Caco-2 (cell line): ENCODE measurements at regions of chr21 and their contacts with region 1.

Region 1: GRCh38 chr21:41715649-41716281 is 51.1 kb downstream of the RIPK4 start:
- DNase-seq: peak; percentile 97 to 99
- H3K4me3 ChIP-seq: no peak overlapping the region
- H3K4me3 Mint-ChIP-seq: peak overlapping the region; percentile 88
- H3K27ac Mint-ChIP-seq: peak overlapping the region; percentile 88
- H3K4me1 ChIP-seq: peaks cover 65% of the 10 kb centered on the region
- H3K4me1 Mint-ChIP-seq: peaks cover 41% of the 10 kb centered on the region
- H3K27me3 ChIP-seq: no peaks in the 10 kb centered on the region
- H3K27me3 Mint-ChIP-seq: no peaks in the 10 kb centered on the region
- CTCF ChIP-seq: no peak

Region 2: DNA sequence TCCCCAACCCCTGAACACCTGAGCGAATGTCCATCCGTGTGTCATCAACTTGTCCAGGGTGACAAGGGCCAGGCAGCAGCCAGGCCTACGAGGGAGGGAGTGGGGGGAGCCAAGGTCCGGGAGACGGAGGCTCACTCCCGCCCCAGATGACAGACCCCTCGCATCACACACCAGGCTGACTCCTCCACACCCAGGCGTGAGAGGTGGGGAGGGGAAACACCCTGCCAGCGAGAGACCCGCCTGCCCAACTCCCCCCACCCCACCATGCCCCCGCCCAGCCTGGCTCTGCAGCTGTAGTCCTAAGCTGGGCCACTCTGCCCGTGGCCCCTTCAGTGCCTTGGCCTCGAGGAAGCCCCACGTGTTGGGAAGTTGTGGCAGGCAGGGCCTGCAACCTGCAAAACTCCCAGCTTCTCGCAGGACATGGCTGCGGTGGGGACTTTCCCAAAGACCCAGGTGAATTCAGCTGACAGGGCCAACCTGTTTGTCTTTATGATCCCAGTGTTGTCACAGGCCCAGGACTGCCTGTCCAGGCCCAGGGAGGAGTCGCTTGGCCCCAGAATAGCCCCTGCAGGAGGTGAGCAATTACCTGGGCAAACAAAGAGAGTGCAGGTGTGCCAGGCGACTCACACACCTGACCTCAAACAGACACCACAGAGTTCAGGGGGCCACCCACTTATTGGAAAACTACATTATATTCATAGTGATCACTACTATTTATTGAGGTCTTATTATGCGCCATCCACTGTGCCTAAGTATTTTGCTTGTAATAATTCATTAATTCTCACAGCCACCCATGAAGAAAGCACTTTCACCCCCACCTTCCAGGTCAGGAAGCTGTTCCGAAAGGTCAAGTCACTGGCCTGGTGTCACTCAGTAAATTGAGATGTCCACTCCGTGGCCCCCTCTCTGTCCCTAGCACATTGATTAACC is 11.6 kb before region 1 on chr21:
- CTCF ChIA-PET with region 1: no interaction called
- POLR2A ChIA-PET with region 1: interaction called, 5 read pairs
- intact Hi-C with region 1: loop called (anchors 1 kb)
- DNase-seq: peak; percentile 85 to 92
- H3K4me3 ChIP-seq: no peak overlapping the region
- H3K4me3 Mint-ChIP-seq: peak overlapping the region; percentile 28
- H3K27ac Mint-ChIP-seq: peak overlapping the region; percentile 67
- H3K4me1 ChIP-seq: peaks cover 53% of the 10 kb centered on the region
- H3K4me1 Mint-ChIP-seq: peaks cover 40% of the 10 kb centered on the region
- H3K27me3 ChIP-seq: no peaks in the 10 kb centered on the region
- H3K27me3 Mint-ChIP-seq: no peaks in the 10 kb centered on the region
- CTCF ChIP-seq: no peak

Region 3: DNA sequence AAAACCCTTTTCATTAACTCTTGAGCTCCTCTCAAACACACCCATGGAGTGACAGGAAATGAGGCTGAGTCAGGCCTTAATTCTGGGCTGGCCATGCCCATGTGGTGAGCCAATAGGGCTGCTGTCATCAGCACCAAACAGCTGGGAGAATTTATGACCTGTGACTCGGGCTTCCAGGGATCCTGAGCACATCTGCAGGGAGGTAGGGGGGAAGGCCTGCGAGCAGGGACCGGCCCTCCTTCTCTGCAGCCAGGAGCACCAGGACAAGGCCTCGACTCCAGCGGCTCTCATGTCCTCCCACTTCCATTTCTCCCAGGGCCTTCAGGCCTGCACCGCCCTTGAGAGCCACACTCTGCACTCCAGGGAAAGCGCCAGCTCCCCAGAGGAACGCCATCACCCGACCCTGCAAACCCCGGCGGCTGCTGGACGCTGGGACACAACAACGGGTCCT is 36.5 kb after region 1 on chr21:
- CTCF ChIA-PET with region 1: interaction called, 4 read pairs
- POLR2A ChIA-PET with region 1: interaction called, 3 read pairs
- intact Hi-C with region 1: loop called (anchors 1 kb)
- DNase-seq: no peak
- H3K4me3 ChIP-seq: no peak overlapping the region
- H3K4me3 Mint-ChIP-seq: peak overlapping the region; percentile 1
- H3K27ac Mint-ChIP-seq: peak overlapping the region; percentile 39
- H3K4me1 ChIP-seq: peaks cover 39% of the 10 kb centered on the region
- H3K4me1 Mint-ChIP-seq: peaks cover 28% of the 10 kb centered on the region
- H3K27me3 ChIP-seq: no peaks in the 10 kb centered on the region
- H3K27me3 Mint-ChIP-seq: no peaks in the 10 kb centered on the region
- CTCF ChIP-seq: no peak

Region 4: GRCh38 chr21:41763398-41763931 is 47.7 kb after region 1 on chr21:
- CTCF ChIA-PET with region 1: interaction called, 7 read pairs
- POLR2A ChIA-PET with region 1: interaction called, 19 read pairs
- intact Hi-C with region 1: loop called (anchors 1 kb)
- DNase-seq: no peak
- H3K4me3 ChIP-seq: no peak overlapping the region
- H3K4me3 Mint-ChIP-seq: peak overlapping the region; percentile 37
- H3K27ac Mint-ChIP-seq: peak overlapping the region; percentile 79
- H3K4me1 ChIP-seq: peaks cover 45% of the 10 kb centered on the region
- H3K4me1 Mint-ChIP-seq: peaks cover 45% of the 10 kb centered on the region
- H3K27me3 ChIP-seq: no peaks in the 10 kb centered on the region
- H3K27me3 Mint-ChIP-seq: no peaks in the 10 kb centered on the region
- CTCF ChIP-seq: no peak

Region 5: DNA sequence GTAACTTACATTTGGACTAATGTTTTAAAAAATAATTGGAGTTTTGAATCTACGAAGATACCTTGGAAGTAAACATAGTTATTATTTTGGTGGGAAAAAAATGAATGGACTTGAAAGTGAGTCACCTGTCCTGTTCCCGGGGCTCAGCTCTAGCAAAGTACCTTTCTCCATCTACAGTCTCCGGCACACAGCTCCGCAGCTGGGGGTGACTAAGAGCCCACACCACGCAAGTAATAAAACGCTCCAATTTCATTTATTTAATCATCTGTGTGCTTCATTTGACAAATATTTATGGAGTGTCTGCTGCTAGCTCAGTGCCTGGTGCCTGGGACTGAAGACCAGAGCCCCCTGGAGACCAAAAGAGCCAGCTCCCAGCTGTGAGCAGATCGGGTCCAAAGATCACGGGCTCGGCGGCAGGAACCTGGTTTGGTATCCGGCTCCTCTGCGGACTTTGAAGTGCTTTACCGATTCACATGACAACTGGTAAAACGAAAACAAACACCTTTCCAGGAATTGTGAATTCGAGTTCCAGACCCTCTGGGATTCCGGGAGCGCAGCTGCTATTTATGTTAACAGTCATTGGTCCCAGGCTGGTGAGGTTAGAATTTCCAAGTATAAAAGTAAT is 52.8 kb after region 1 on chr21:
- CTCF ChIA-PET with region 1: interaction called, 7 read pairs
- POLR2A ChIA-PET with region 1: interaction called, 19 read pairs
- intact Hi-C with region 1: loop called (anchors 1 kb)
- DNase-seq: peak; percentile 91 to 93
- H3K4me3 ChIP-seq: peak overlapping the region; percentile 90
- H3K4me3 Mint-ChIP-seq: peak overlapping the region; percentile 90
- H3K27ac Mint-ChIP-seq: peak overlapping the region; percentile 94
- H3K4me1 ChIP-seq: peaks cover 40% of the 10 kb centered on the region
- H3K4me1 Mint-ChIP-seq: peaks cover 64% of the 10 kb centered on the region
- H3K27me3 ChIP-seq: no peaks in the 10 kb centered on the region
- H3K27me3 Mint-ChIP-seq: no peaks in the 10 kb centered on the region
- CTCF ChIP-seq: peak; percentile 41 to 68

Region 6: GRCh38 chr21:41777951-41778874 is 62.4 kb after region 1 on chr21:
- CTCF ChIA-PET with region 1: interaction called, 7 read pairs
- POLR2A ChIA-PET with region 1: no interaction called
- intact Hi-C with region 1: loop called (anchors 1 kb)
- DNase-seq: peak; percentile 90 to 92
- H3K4me3 ChIP-seq: no peak overlapping the region
- H3K4me3 Mint-ChIP-seq: peak overlapping the region; percentile 35
- H3K27ac Mint-ChIP-seq: no peak overlapping the region
- H3K4me1 ChIP-seq: peaks cover 19% of the 10 kb centered on the region
- H3K4me1 Mint-ChIP-seq: peaks cover 26% of the 10 kb centered on the region
- H3K27me3 ChIP-seq: no peaks in the 10 kb centered on the region
- H3K27me3 Mint-ChIP-seq: no peaks in the 10 kb centered on the region
- CTCF ChIP-seq: peak; percentile 88 to 89